Right cardiac atrium (tissue), 5 donors: ENCODE measurements at regions of chr13 and their contacts with region 1.

Region 1: GRCh38 chr13:39616087-39616694 is 13.2 kb upstream of the LHFPL6 start:
- DNase-seq: peak in 2 of 3 donors; percentile 24 to 46
- ATAC-seq: peak; percentile 84
- H3K4me3 ChIP-seq: no peak overlapping the region
- H3K27ac ChIP-seq: no peak overlapping the region
- H3K4me1 ChIP-seq: no peaks in the 10 kb centered on the region
- H3K27me3 ChIP-seq: no peaks in the 10 kb centered on the region

Region 2: GRCh38 chr13:39051157-39051556 is 565.0 kb before region 1 on chr13:
- intact Hi-C with region 1: loop called (anchors 5 kb)
- DNase-seq: no peak
- ATAC-seq: no peak
- H3K4me3 ChIP-seq: no peak overlapping the region
- H3K27ac ChIP-seq: no peak overlapping the region
- H3K4me1 ChIP-seq: no peaks in the 10 kb centered on the region
- H3K27me3 ChIP-seq: no peaks in the 10 kb centered on the region

Region 3: DNA sequence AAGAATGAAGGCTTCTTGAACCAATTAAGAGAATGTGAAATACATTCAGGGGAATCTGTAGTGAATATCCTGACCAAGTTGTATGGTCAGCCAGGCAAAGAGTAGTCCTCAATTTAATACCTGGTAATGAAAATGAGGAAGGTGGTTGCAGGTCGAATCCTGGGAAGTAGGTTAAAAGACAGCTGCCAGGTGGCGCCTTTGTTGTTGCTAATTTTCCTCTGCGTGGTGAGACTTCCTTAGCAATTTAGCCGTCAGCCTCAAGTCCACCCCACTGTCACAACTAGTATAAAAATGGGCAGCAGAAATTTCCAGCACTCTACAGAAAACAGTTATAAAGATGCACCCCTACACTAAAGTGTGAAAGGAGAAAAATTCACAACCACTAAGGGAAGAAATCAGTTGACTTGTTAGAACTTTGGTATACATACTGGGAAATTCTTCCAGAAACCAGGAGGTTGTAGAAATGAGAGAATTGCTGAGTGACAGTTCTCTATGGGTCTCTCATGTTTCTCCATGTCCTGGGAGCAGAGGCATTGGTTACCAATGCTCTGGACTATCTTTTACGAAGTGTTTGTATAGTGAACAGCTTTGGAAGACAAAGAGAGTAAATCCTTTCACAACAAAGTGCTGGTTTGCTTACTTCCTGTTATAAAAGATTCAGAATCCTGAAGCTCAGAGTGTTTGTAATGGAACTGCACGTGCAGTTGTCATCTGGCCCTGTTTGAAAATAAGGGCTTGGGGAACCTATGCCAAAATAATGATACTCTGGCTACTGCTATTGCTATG is 342.0 kb before region 1 on chr13:
- intact Hi-C with region 1: loop called in 2 of 4 experiments (anchors 5 to 10 kb)
- DNase-seq: peak in 1 of 3 donors; percentile 43
- ATAC-seq: no peak
- H3K4me3 ChIP-seq: no peak overlapping the region
- H3K27ac ChIP-seq: no peak overlapping the region
- H3K4me1 ChIP-seq: peaks cover 5% of the 10 kb centered on the region
- H3K27me3 ChIP-seq: no peaks in the 10 kb centered on the region

Region 4: DNA sequence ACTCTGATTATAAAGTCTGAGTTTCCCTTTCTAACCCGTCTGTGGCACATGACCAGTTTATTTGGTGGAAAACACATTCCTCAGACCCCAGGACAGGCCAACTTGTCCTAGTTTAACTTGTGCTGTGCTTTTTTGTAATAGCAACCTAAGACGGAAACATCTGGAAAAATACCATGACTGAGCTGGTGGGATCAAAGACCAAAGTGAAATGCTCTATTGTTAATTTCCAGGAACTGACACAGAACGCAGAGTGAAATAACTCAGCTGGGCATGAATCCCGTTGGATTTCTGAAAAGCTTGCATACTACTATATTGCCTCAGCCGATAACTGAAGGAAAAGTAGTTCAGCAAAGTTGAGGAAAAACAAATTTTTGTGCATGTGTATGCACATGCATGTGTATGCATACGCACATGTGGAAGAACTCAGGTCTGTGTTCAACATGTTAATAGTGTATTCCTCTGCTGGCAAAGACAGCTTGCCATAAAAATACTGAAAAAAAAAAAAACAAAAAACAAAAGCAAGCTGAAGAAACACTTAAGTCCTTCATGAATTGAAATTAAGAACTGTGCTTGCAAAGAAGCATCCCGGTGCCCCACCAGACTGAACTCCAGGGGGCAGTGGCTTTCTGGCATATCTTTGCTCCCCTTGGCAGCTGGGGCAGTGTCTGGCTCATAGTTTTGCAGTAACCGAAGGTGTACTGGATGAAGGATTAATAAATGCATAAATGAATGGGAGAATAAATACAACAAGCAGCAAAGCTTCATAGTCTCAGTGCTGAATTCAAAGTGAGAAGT is 201.0 kb before region 1 on chr13:
- intact Hi-C with region 1: loop called in 1 of 4 experiments (anchors 5 kb)
- DNase-seq: peak; percentile 49 to 77 (median 73)
- ATAC-seq: peak; percentile 67 to 88
- H3K4me3 ChIP-seq: peak overlapping the region; percentile 32
- H3K27ac ChIP-seq: peak overlapping the region; percentile 58
- H3K4me1 ChIP-seq: peaks cover 11% of the 10 kb centered on the region
- H3K27me3 ChIP-seq: no peaks in the 10 kb centered on the region